ENCODE measurements at regions of chr6 and their contacts with region 1.

Region 1: GRCh38 chr6:37177077-37177934 is 7.4 kb downstream of the PIM1 start:
- DNase-seq: no peak
- ATAC-seq: peak; percentile 12
- H3K4me3 Mint-ChIP-seq: peak overlapping the region; percentile 35
- H3K27ac Mint-ChIP-seq: peak overlapping the region; percentile 96
- H3K4me1 Mint-ChIP-seq: peaks cover 76% of the 10 kb centered on the region
- H3K27me3 Mint-ChIP-seq: no peaks in the 10 kb centered on the region

Region 2: DNA sequence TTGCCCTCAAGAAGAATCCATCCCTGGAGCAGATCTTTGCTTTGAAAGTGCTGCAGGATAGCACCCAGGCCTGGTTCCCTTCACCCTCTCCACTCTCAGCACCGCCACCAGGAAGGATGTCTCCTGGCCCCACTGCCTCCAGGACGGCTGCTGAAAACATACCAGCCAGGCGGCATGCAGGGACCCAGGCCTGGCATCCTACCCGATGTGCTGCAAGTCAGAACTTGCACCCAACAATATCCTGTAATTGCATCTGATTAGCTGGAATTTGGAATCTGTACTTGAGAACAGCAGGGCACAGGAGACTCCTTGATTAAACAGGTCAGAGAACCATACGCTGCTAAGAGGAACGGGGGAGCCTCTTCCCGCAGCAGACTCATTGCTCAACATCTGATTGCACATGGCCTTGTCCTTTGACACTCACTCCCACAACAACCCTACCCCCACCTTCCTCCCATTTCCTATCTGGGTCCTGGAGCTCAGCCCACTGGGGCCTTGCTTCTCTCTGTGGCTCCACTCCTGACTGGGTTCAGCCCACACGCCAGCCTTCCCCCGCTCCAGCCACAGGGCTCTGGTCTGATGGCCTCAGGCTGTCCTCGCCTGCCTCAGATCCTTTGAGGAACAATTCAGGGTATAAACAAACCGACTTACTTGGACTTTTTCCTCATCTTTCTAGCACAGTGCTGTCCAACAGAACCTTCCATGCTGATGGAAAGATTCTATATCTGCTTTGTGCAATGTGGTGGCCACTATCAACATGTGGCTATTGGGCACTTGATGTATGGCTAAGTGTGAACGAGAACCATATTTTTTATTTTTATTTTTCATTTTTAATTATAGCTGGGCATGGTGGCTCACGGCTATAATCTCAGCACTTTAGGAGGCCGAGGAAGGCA is 93.8 kb before region 1 on chr6:
- CTCF ChIA-PET with region 1: no interaction called
- DNase-seq: no peak
- ATAC-seq: no peak
- H3K4me3 Mint-ChIP-seq: no peak overlapping the region
- H3K27ac Mint-ChIP-seq: no peak overlapping the region
- H3K4me1 Mint-ChIP-seq: peaks cover 2% of the 10 kb centered on the region
- H3K27me3 Mint-ChIP-seq: peaks cover 4% of the 10 kb centered on the region

Region 3: GRCh38 chr6:37190159-37190535 is 12.8 kb after region 1 on chr6:
- CTCF ChIA-PET with region 1: interaction called, 50 read pairs
- DNase-seq: no peak
- ATAC-seq: peak; percentile 31
- H3K4me3 Mint-ChIP-seq: no peak overlapping the region
- H3K27ac Mint-ChIP-seq: peak overlapping the region; percentile 81
- H3K4me1 Mint-ChIP-seq: peaks cover 73% of the 10 kb centered on the region
- H3K27me3 Mint-ChIP-seq: no peaks in the 10 kb centered on the region

Measured in activated CD8-positive, alpha-beta memory T cell treated with anti-CD3 and anti-CD28 coated beads, Interleukin-2, amount 10 ng/mL, durations not matched to agents 7 days and 5 days (primary cell).